Activated CD4-positive, alpha-beta memory T cell treated with anti-CD3 and anti-CD28 coated beads for 36 hours (primary cell): ENCODE measurements at regions of chr5 and their contacts with region 1.

Region 1: DNA sequence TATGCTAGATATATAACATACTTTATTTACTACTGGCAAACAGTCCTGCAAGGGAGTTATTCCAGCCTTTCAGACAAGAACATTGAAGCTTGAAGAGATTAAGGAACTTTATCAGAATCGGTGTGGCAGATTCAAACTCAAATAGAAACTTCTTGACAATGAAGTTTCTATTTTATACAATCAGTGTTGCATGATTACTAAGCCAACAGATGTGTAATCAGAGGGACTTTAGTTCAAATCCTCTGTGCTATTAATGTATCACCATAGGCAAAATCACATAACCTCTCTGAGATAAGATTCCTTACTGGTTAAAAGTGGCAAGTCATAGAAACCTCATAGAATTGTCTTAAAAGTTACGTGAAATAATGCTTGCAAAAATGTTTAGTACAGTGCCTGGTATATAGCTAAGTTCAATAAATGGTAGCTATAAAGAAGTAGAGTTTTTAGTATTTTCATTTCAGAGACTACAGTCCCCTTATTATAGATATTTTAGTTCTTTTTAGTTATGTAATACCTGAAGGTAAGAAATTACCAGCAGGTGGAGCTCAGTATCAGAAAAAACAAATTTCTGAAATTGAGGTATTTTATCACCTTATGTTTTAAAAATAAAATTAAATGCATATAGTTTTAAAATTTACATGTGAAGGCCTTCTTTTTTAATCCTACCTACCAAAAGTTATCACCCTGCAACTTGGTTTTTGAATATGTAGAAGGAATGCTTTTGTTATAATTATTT is 172.1 kb downstream of the FER start:
- DNase-seq: no peak
- H3K4me3 Mint-ChIP-seq: no peak overlapping the region
- H3K27ac Mint-ChIP-seq: no peak overlapping the region
- H3K4me1 Mint-ChIP-seq: peaks cover 4% of the 10 kb centered on the region
- H3K27me3 Mint-ChIP-seq: no peaks in the 10 kb centered on the region

Region 2: DNA sequence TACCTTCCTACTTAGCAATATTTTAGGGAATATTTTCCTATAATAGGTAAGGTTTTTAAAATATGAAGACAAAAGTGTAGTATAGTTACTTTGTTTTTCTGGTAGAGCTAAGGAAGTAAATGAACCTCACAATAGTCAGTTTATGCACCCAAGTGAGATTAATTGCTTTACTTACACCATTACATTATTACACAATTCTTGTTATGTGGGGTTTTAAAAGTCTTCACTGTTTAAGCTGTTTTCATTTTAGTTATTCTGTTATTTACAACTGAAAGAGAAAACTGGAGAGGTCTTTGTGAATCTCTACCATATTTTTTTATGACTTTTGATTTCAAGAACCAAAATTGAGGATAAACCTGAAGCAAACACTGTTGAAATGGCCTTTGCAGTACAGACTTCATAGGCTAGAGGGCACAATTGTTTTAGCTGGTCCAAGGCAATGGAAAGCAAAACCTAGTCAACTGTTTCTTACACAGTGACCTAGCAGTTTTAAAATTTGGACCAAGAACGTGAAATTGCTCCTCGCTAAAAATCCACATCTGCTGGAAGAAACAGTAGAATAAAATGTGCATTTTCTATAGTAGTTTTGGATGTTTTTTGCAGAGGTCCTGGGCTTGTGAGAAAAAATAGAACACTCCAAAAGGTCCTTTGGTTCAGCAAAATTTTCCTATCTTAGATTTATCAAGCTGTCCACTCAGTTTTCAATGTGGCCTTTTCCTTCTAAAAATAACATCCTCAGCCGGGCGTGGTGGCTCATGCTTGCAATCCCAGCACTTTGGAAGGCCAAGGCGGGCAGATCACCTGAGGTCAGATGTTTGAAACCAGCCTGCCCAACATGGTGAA is 238.5 kb before region 1 on chr5:
- CTCF ChIA-PET with region 1: no interaction called
- POLR2A ChIA-PET with region 1: no interaction called
- intact Hi-C with region 1: loop called (anchors 10 kb)
- DNase-seq: no peak
- H3K4me3 Mint-ChIP-seq: no peak overlapping the region
- H3K27ac Mint-ChIP-seq: no peak overlapping the region
- H3K4me1 Mint-ChIP-seq: no peaks in the 10 kb centered on the region
- H3K27me3 Mint-ChIP-seq: peaks cover 3% of the 10 kb centered on the region

Region 3: GRCh38 chr5:109196486-109197160 is 276.9 kb after region 1 on chr5:
- CTCF ChIA-PET with region 1: no interaction called
- POLR2A ChIA-PET with region 1: no interaction called
- intact Hi-C with region 1: no loop called
- DNase-seq: no peak
- H3K4me3 Mint-ChIP-seq: no peak overlapping the region
- H3K27ac Mint-ChIP-seq: no peak overlapping the region
- H3K4me1 Mint-ChIP-seq: no peaks in the 10 kb centered on the region
- H3K27me3 Mint-ChIP-seq: no peaks in the 10 kb centered on the region

Region 4: DNA sequence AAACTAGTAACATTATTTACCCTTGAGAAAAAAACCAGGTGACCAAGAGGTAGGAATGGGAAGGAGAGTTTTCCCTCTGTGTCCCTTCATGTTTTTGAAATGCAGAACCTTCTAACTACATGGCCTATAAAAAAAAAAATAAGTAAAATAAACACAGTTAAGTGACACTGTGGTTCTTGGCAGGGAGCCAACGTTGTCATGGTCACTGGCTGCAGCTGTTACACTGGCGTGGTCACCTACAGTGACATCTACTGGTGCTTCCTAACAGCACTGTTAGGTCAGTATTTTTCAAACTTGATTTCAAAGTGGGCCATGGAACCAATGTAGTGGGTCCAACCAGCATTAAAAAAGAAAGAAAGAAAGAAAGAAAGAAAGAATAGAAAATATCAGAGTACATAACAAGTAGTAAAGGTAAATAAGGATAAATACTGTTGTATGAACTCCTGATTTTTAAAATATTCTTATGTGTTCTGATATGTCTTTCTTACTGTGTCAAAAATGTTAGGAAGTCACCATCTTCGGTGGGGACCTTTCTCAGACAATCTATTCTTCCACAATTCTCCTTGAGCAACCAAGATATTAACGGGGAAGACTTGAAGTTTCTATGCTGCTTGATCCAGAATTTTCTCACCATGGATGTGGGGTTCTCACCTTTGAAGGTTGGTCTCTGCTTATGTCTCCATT is 549.1 kb after region 1 on chr5:
- CTCF ChIA-PET with region 1: interaction called, 3 read pairs
- POLR2A ChIA-PET with region 1: no interaction called
- intact Hi-C with region 1: loop called (anchors 5 kb)
- DNase-seq: peak; percentile 84
- H3K4me3 Mint-ChIP-seq: no peak overlapping the region
- H3K27ac Mint-ChIP-seq: no peak overlapping the region
- H3K4me1 Mint-ChIP-seq: peaks cover 3% of the 10 kb centered on the region
- H3K27me3 Mint-ChIP-seq: peaks cover 6% of the 10 kb centered on the region